Caco-2 (cell line): ENCODE measurements at regions of chr11 and their contacts with region 1.

Region 1: DNA sequence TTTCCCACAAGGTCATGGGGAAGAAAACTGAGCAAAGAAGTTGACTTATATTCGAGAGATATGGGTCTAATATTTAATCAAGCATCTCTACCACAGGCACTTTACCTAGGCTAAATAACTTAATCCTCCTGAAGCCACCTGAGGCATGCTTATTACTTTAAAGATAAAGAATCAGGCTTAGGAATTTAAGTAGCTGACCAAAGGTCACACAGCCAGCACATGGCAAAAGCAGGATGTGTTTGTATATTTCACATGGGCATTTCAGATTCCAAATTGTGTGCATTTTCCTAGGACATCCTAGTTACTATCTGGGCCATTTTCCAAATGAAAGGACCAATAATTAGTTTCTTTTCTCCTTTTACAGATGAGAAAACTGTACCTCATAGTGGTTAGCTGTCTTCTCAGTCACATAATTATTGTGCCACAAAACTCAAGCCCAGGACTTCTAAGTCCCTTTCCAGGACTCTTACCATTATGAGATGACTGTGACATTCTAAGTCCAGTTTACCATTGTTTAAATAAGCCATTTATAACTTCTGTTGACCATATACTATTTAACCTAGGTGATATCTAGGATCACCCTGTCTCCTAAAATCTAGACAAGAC is 112.1 kb upstream of the ZC3H12C start:
- DNase-seq: peak; percentile 62 to 66
- H3K4me3 ChIP-seq: no peak overlapping the region
- H3K4me3 Mint-ChIP-seq: peak overlapping the region; percentile 0
- H3K27ac Mint-ChIP-seq: peak overlapping the region; percentile 30
- H3K4me1 ChIP-seq: peaks cover 32% of the 10 kb centered on the region
- H3K4me1 Mint-ChIP-seq: peaks cover 20% of the 10 kb centered on the region
- H3K27me3 ChIP-seq: no peaks in the 10 kb centered on the region
- H3K27me3 Mint-ChIP-seq: no peaks in the 10 kb centered on the region
- CTCF ChIP-seq: no peak

Region 2: GRCh38 chr11:109970516-109971183 is 10.5 kb before region 1 on chr11:
- CTCF ChIA-PET with region 1: no interaction called
- POLR2A ChIA-PET with region 1: no interaction called
- intact Hi-C with region 1: no loop called
- DNase-seq: no peak
- H3K4me3 ChIP-seq: no peak overlapping the region
- H3K4me3 Mint-ChIP-seq: no peak overlapping the region
- H3K27ac Mint-ChIP-seq: no peak overlapping the region
- H3K4me1 ChIP-seq: no peaks in the 10 kb centered on the region
- H3K4me1 Mint-ChIP-seq: no peaks in the 10 kb centered on the region
- H3K27me3 ChIP-seq: no peaks in the 10 kb centered on the region
- H3K27me3 Mint-ChIP-seq: peaks cover 3% of the 10 kb centered on the region
- CTCF ChIP-seq: no peak

Region 3: DNA sequence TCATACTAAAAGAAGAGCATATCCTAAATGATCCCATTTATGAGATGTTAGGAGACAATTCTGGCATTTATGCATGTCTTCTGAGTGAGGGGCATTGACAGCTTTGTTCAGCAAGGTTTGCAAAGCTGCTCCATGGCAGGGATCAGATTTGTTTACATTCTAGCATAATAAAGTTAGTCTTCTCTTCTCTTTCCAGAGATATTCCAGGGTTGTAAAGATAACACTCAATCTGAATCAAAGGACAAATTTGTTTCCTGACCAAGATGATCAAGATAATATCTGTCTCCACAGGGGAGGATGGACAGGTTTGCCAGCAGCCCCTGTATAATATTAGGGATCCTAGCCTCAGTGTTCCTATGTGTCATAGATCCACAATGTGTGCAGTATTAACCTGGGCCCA is 34.6 kb after region 1 on chr11:
- CTCF ChIA-PET with region 1: no interaction called
- POLR2A ChIA-PET with region 1: no interaction called
- intact Hi-C with region 1: loop called (anchors 1 kb)
- DNase-seq: peak in 1 of 2 experiments; percentile 16
- H3K4me3 ChIP-seq: no peak overlapping the region
- H3K4me3 Mint-ChIP-seq: no peak overlapping the region
- H3K27ac Mint-ChIP-seq: no peak overlapping the region
- H3K4me1 ChIP-seq: no peaks in the 10 kb centered on the region
- H3K4me1 Mint-ChIP-seq: peaks cover 11% of the 10 kb centered on the region
- H3K27me3 ChIP-seq: no peaks in the 10 kb centered on the region
- H3K27me3 Mint-ChIP-seq: peaks cover 24% of the 10 kb centered on the region
- CTCF ChIP-seq: no peak